MCF 10A (cell line): ENCODE measurements at regions of chr10 and their contacts with region 1.

Region 1: GRCh38 chr10:93859049-93859655 is 34.6 kb upstream of the SLC35G1 start:
- DNase-seq: peak; percentile 26
- H3K4me3 Mint-ChIP-seq: no peak overlapping the region
- H3K27ac Mint-ChIP-seq: no peak overlapping the region
- H3K4me1 Mint-ChIP-seq: no peaks in the 10 kb centered on the region
- H3K27me3 Mint-ChIP-seq: no peaks in the 10 kb centered on the region
- CTCF ChIP-seq: peak; percentile 56

Region 2: GRCh38 chr10:93873427-93874115 is 14.4 kb after region 1 on chr10:
- CTCF ChIA-PET with region 1: interaction called, 18 read pairs
- POLR2A ChIA-PET with region 1: no interaction called
- intact Hi-C with region 1: no loop called
- DNase-seq: peak; percentile 53
- H3K4me3 Mint-ChIP-seq: no peak overlapping the region
- H3K27ac Mint-ChIP-seq: no peak overlapping the region
- H3K4me1 Mint-ChIP-seq: peaks cover 6% of the 10 kb centered on the region
- H3K27me3 Mint-ChIP-seq: peaks cover 3% of the 10 kb centered on the region
- CTCF ChIP-seq: no peak

Region 3: GRCh38 chr10:94006591-94007561 is 147.7 kb after region 1 on chr10:
- CTCF ChIA-PET with region 1: no interaction called
- POLR2A ChIA-PET with region 1: no interaction called
- intact Hi-C with region 1: no loop called
- DNase-seq: no peak
- H3K4me3 Mint-ChIP-seq: no peak overlapping the region
- H3K27ac Mint-ChIP-seq: no peak overlapping the region
- H3K4me1 Mint-ChIP-seq: peaks cover 7% of the 10 kb centered on the region
- H3K27me3 Mint-ChIP-seq: no peaks in the 10 kb centered on the region
- CTCF ChIP-seq: no peak